Posterior vena cava (tissue), 2 donors: ENCODE measurements at regions of chr6 and their contacts with region 1.

Region 1: GRCh38 chr6:37169496-37170272 is at the start of gene PIM1:
- DNase-seq: peak; percentile 100
- total RNA-seq, gene PIM1: 32.3 to 34.3 TPM

Region 2: DNA sequence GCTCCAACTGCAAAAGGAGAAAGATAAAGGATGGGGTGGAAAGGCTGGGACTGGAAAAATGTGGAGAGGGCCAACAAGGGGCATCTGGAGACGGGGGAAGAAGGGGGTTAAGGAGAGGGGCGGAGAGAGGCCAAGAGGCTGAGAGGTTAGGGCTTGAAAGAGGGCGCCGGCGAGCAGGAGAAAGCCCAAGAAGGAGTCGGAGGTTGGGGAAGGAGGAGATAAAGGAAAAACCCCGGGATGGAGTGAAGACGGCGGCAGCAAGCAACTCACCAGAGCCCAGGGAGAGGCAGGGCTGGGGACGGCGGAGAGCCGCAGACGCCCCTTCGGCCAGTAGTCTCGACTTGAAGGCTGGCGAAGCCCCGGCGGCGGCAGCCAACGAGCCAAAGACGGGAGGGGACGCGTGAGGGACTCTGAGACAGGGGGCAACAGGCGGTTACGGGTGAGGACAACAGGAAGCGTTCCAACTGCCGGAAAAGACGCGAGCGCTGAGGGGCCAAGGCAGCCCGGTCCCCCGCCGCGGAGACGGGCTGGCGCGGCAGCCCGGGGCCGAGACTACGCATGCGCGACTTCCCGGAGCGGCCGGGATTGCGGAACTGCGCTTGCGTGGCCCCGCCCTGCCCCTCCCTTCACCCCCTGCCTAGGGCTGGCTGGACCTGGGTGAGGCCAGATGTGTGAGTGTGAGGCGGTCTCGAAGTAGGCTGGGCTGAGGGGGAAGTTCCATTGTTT is 622.6 kb before region 1 on chr6 and contains the start of gene STK38:
- intact Hi-C with region 1: no loop called
- DNase-seq: peak; percentile 98
- total RNA-seq, gene STK38: 32.1 to 32.7 TPM

Region 3: GRCh38 chr6:36884610-36885009 is 285.1 kb before region 1 on chr6:
- intact Hi-C with region 1: no loop called
- DNase-seq: no peak

Region 4: GRCh38 chr6:37029249-37029971 is 140.3 kb before region 1 on chr6:
- intact Hi-C with region 1: loop called in 1 of 2 experiments (anchors 10 kb)
- DNase-seq: peak; percentile 94

Region 5: GRCh38 chr6:37051138-37052026 is 118.3 kb before region 1 on chr6:
- intact Hi-C with region 1: loop called (anchors 5 kb)
- DNase-seq: peak; percentile 97

Region 6: DNA sequence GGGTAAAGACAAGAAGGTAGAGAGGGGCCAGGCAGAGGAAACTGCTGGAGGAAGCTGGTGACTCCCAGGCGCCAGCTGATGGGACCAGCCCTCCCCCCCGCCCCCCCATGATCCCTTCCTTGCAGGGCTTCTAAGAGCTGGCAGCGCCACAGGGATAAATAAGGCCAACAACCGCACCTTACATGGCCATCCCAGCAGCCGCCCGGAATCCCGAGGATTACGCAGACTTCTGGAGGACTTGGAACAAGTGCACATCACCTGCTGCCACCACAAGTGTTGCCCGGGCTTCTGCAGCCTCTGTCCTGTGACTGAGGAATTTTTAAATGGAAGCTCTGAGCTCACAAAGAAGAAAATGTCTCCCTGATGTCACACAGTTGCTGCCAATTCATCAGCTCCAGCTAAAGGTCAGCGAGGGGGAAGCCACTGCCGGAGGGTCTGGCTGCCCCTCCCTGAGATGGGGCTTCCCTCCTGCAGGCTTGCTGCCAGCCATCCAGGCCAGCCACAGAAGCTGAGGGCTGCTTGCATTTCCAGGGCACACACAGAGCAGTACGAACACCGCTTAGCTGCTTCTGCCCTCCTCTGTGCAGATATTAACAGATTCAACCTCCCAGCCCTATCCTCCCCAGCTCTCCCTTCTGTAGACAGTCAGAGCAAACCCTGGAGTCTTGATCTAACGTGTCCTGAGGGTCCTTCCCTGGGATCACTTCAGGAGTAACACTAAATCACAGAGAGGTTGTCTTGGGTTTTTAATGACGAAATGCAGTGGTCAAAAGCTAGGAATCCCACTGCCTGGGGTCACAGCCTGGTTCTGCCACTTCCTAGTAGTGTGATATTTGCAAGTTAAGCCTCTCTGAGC is 38.4 kb before region 1 on chr6:
- intact Hi-C with region 1: loop called (anchors 2 to 10 kb)
- DNase-seq: peak; percentile 84

Region 7: GRCh38 chr6:37146735-37147157 is 22.9 kb before region 1 on chr6:
- intact Hi-C with region 1: loop called in 1 of 2 experiments (anchors 1 kb)
- DNase-seq: no peak

Region 8: DNA sequence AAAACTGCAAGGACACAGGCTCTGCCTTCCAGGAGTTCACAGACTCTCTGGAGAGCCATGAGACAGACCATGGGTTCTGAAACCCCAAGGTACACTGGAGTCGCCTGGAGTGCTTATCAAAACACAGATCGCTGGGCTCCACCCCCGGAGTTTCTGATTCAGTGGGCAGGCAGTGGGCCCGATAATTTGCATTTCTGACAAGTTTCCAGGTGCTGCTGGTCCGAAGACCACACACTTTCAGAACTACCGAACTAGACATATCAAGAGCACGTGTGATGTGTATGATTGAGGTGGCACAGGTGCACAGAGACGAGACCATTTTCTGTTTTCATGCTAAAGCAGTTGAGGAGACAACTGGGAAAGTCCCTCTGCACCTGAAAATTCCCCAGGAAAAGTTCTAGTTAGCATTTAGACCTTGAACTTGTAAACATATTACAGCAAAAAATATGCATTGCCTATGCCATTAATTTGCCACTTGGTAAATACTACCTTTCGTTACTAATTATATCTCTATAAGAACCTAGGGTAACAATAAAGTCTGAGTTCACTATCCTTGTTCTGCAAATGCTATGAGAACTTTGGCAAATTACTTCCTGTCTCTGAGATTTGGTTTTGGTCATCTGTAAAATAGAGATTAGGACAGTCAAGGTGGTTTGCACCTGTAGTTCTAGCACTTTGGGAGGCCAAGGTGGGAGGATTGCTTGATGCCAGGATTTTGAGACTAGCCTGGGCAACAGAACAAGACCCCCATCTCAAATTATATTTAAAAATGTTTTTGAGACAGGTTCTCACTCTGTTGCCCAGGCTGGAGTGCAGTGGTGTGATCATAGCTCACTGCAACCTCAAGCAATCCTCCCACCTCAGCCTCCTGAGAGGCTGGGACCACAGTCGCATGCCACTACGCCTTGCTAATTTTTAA is 14.0 kb before region 1 on chr6:
- intact Hi-C with region 1: loop called in 1 of 2 experiments (anchors 1 kb)
- DNase-seq: no peak

Region 9: GRCh38 chr6:37207903-37208456 is 38.3 kb after region 1 on chr6:
- intact Hi-C with region 1: loop called in 1 of 2 experiments (anchors 5 kb)
- DNase-seq: peak; percentile 94